GM12878 (cell line): ENCODE measurements at regions of chr6 and their contacts with region 1.

Region 1: DNA sequence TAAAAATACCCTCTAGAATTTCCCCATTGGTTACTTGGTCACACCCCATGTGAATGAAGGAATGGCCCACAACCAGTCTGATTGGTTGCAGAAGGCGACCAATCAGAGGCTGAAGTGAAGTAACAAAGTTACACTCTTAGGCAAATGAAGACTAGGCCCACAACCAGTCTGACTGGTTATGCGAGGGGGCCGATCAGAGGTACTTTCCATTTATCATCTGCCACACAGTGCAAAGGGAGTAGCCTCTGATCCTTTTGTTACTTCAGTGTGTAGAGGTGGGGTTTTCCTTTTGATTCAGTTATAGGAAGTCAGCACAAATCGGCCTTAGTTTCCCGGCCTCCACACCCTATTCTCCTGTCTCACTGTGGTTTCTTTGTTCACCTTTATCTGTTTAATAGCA is 61.2 kb upstream of the SGK1 start:
- DNase-seq: peak; percentile 72
- ATAC-seq: peak; percentile 97
- H3K4me3 ChIP-seq: 0 out of 2 replicates have a peak overlapping the region, but pooled peaks have one; percentile 13
- H3K27ac ChIP-seq: peak overlapping the region; percentile 45; the same call in 1 of the 2 replicates
- H3K4me1 ChIP-seq: peaks cover 19% of the 10 kb centered on the region
- H3K27me3 ChIP-seq: no peaks in the 10 kb centered on the region
- CTCF ChIP-seq: no peak
- EP300 ChIP-seq: no peak
- POLR2A ChIP-seq: 0 out of 2 replicates have a peak, but pooled peaks have one; percentile 39
- RAD21 ChIP-seq: no peak

Region 2: DNA sequence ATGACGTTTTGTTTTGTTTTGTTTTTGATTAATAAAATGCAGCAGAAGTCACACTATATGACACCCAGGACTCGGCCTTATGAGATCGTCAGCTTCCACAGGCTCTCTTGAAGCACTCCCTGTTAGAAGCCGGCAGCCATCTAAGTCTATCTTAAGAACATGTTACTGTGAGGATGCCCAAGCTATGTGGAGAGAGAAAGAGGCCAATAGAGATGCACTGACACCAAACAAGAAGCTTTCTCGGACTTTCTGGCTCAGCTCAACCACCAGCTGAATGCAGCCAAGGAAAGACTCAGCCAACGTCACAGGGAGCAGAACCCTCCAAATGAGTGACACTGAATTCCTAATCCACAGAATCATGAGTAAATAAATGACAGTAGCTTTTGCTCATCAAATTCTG is 75.2 kb before region 1 on chr6:
- CTCF ChIA-PET with region 1: no interaction called
- POLR2A ChIA-PET with region 1: no interaction called
- RAD21 ChIA-PET with region 1: no interaction called
- SMC1A ChIA-PET with region 1: no interaction called
- in situ Hi-C with region 1: no loop called
- intact Hi-C with region 1: no loop called
- DNase-seq: no peak
- ATAC-seq: no peak
- H3K4me3 ChIP-seq: no peak overlapping the region
- H3K27ac ChIP-seq: no peak overlapping the region
- H3K4me1 ChIP-seq: no peaks in the 10 kb centered on the region
- H3K27me3 ChIP-seq: no peaks in the 10 kb centered on the region
- CTCF ChIP-seq: no peak
- EP300 ChIP-seq: no peak
- POLR2A ChIP-seq: no peak
- RAD21 ChIP-seq: no peak

Region 3: DNA sequence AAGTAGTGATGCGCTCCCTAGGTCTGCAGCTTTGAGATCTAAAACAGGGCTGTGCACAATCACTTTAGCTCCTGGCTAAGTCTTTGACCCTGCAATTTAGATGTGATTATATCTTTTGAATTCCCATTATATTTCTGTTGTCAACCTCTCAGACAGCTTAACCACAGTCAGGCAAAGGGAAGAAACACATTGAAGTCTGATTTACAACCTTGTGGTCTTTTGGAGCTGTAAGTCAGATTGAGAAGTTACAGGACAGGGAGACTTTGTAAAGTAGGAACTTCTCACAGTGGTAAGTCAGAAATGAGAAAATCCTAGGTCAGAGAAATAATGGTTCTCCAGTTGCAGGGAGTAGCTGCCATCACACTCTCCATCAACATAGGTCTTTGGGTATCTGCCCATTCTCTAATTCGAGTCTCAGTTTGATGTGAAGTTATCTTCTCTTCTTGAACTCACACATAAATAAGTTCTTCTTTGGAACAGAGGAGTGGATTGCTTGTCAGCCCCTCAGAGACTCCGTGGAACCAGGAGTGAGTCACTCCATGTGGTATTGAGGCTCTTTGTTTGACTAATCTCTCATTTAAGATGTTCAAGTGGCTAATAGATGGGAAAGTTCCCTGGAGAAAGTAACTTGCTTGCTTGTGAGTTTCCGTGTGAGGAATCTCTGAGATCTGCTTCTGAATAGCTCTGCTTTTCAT is 26.2 kb before region 1 on chr6:
- CTCF ChIA-PET with region 1: interaction called, 7 read pairs
- POLR2A ChIA-PET with region 1: interaction called, 6 read pairs
- RAD21 ChIA-PET with region 1: interaction called, 11 read pairs
- SMC1A ChIA-PET with region 1: interaction called, 23 read pairs
- in situ Hi-C with region 1: no loop called
- intact Hi-C with region 1: no loop called
- DNase-seq: no peak
- ATAC-seq: no peak
- H3K4me3 ChIP-seq: no peak overlapping the region
- H3K27ac ChIP-seq: no peak overlapping the region
- H3K4me1 ChIP-seq: no peaks in the 10 kb centered on the region
- H3K27me3 ChIP-seq: no peaks in the 10 kb centered on the region
- CTCF ChIP-seq: no peak
- EP300 ChIP-seq: no peak
- POLR2A ChIP-seq: no peak
- RAD21 ChIP-seq: no peak

Region 4: GRCh38 chr6:134394208-134394607 is 15.1 kb after region 1 on chr6:
- CTCF ChIA-PET with region 1: interaction called, 3 read pairs
- POLR2A ChIA-PET with region 1: interaction called, 4 read pairs
- RAD21 ChIA-PET with region 1: interaction called, 9 read pairs
- SMC1A ChIA-PET with region 1: interaction called, 13 read pairs
- in situ Hi-C with region 1: no loop called
- intact Hi-C with region 1: no loop called
- DNase-seq: no peak
- ATAC-seq: no peak
- H3K4me3 ChIP-seq: no peak overlapping the region
- H3K27ac ChIP-seq: no peak overlapping the region
- H3K4me1 ChIP-seq: no peaks in the 10 kb centered on the region; the same call in 1 of the 2 replicates
- H3K27me3 ChIP-seq: no peaks in the 10 kb centered on the region
- CTCF ChIP-seq: no peak
- EP300 ChIP-seq: no peak
- POLR2A ChIP-seq: no peak
- RAD21 ChIP-seq: no peak

Region 5: GRCh38 chr6:134436281-134436815 is 57.3 kb after region 1 on chr6:
- CTCF ChIA-PET with region 1: interaction called, 3 read pairs
- POLR2A ChIA-PET with region 1: interaction called, 3 read pairs
- RAD21 ChIA-PET with region 1: interaction called, 5 read pairs
- SMC1A ChIA-PET with region 1: interaction called, 12 read pairs
- in situ Hi-C with region 1: no loop called
- intact Hi-C with region 1: loop called (anchors 2 kb)
- DNase-seq: peak; percentile 57
- ATAC-seq: peak; percentile 95
- H3K4me3 ChIP-seq: peak overlapping the region; percentile 9; the same call in 1 of the 2 replicates
- H3K27ac ChIP-seq: no peak overlapping the region
- H3K4me1 ChIP-seq: peaks cover 9% of the 10 kb centered on the region
- H3K27me3 ChIP-seq: no peaks in the 10 kb centered on the region
- CTCF ChIP-seq: no peak
- EP300 ChIP-seq: no peak
- POLR2A ChIP-seq: no peak
- RAD21 ChIP-seq: no peak